Natural killer cell (primary cell): ENCODE measurements at regions of chr9 and their contacts with region 1.

Region 1: GRCh38 chr9:13427587-13427986 is 148.1 kb upstream of the MPDZ start:
- DNase-seq: peak in 1 of 2 donors; percentile 46
- ATAC-seq: no peak
- H3K4me3 ChIP-seq: no peak overlapping the region
- H3K4me3 Mint-ChIP-seq: no peak overlapping the region
- H3K27ac ChIP-seq: no peak overlapping the region
- H3K27ac Mint-ChIP-seq: no peak overlapping the region
- H3K4me1 ChIP-seq: no peaks in the 10 kb centered on the region
- H3K4me1 Mint-ChIP-seq: no peaks in the 10 kb centered on the region
- H3K27me3 ChIP-seq: no peaks in the 10 kb centered on the region
- H3K27me3 Mint-ChIP-seq: no peaks in the 10 kb centered on the region
- CTCF ChIP-seq: peak; percentile 47

Region 2: GRCh38 chr9:13358128-13358527 is 69.5 kb before region 1 on chr9:
- intact Hi-C with region 1: no loop called
- DNase-seq: no peak
- ATAC-seq: no peak
- H3K4me3 ChIP-seq: no peak overlapping the region
- H3K4me3 Mint-ChIP-seq: no peak overlapping the region
- H3K27ac ChIP-seq: no peak overlapping the region
- H3K27ac Mint-ChIP-seq: no peak overlapping the region
- H3K4me1 ChIP-seq: no peaks in the 10 kb centered on the region
- H3K4me1 Mint-ChIP-seq: no peaks in the 10 kb centered on the region
- H3K27me3 ChIP-seq: no peaks in the 10 kb centered on the region
- H3K27me3 Mint-ChIP-seq: no peaks in the 10 kb centered on the region
- CTCF ChIP-seq: no peak

Region 3: GRCh38 chr9:14768405-14769229 is 1341.0 kb after region 1 on chr9:
- intact Hi-C with region 1: loop called (anchors 5 kb)
- DNase-seq: peak in 1 of 2 donors; percentile 56
- ATAC-seq: peak in 1 of 3 donors; percentile 30
- H3K4me3 ChIP-seq: no peak overlapping the region
- H3K4me3 Mint-ChIP-seq: no peak overlapping the region
- H3K27ac ChIP-seq: no peak overlapping the region
- H3K27ac Mint-ChIP-seq: no peak overlapping the region
- H3K4me1 ChIP-seq: no peaks in the 10 kb centered on the region
- H3K4me1 Mint-ChIP-seq: peaks cover 4% of the 10 kb centered on the region in 2 donors
- H3K27me3 ChIP-seq: no peaks in the 10 kb centered on the region
- H3K27me3 Mint-ChIP-seq: peaks cover 4 to 25% of the 10 kb centered on the region in 2 donors
- CTCF ChIP-seq: peak; percentile 75